Caco-2 (cell line): ENCODE measurements at regions of chr1 and their contacts with region 1.

Region 1: DNA sequence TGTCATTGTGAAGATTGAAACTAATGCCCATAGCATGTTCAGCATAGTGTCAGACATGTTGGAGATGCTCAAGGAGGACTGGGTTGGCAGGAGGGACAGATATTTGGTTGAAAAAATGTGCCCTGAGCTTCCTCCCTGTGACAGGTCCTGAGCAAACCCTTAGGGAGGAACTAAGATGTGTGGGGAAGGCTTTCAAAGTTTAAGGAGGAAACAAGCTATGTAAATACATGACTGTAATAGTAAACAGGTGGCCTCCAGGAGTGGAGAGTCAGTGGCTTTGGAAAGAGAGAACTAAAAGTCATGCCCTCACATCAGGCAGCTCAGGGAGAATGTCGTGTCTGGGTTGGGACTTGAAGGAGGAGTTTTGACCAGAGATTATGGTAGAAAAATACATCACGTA is 9.7 kb upstream of the KIRREL1 start:
- DNase-seq: no peak
- H3K4me3 ChIP-seq: no peak overlapping the region
- H3K4me3 Mint-ChIP-seq: no peak overlapping the region
- H3K27ac Mint-ChIP-seq: no peak overlapping the region
- H3K4me1 ChIP-seq: no peaks in the 10 kb centered on the region
- H3K4me1 Mint-ChIP-seq: no peaks in the 10 kb centered on the region
- H3K27me3 ChIP-seq: no peaks in the 10 kb centered on the region; the same call in 1 of the 2 replicates
- H3K27me3 Mint-ChIP-seq: peaks cover 6% of the 10 kb centered on the region
- CTCF ChIP-seq: no peak

Region 2: GRCh38 chr1:157758018-157758417 is 225.8 kb before region 1 on chr1:
- CTCF ChIA-PET with region 1: no interaction called
- POLR2A ChIA-PET with region 1: no interaction called
- intact Hi-C with region 1: no loop called
- DNase-seq: no peak
- H3K4me3 ChIP-seq: no peak overlapping the region
- H3K4me3 Mint-ChIP-seq: no peak overlapping the region
- H3K27ac Mint-ChIP-seq: no peak overlapping the region
- H3K4me1 ChIP-seq: no peaks in the 10 kb centered on the region
- H3K4me1 Mint-ChIP-seq: no peaks in the 10 kb centered on the region
- H3K27me3 ChIP-seq: no peaks in the 10 kb centered on the region
- H3K27me3 Mint-ChIP-seq: no peaks in the 10 kb centered on the region
- CTCF ChIP-seq: no peak

Region 3: GRCh38 chr1:157963713-157964112 is 20.1 kb before region 1 on chr1:
- CTCF ChIA-PET with region 1: interaction called, 3 read pairs
- POLR2A ChIA-PET with region 1: no interaction called
- intact Hi-C with region 1: loop called (anchors 2 kb)
- DNase-seq: peak; percentile 79 to 82
- H3K4me3 ChIP-seq: no peak overlapping the region
- H3K4me3 Mint-ChIP-seq: no peak overlapping the region
- H3K27ac Mint-ChIP-seq: no peak overlapping the region
- H3K4me1 ChIP-seq: peaks cover 32% of the 10 kb centered on the region
- H3K4me1 Mint-ChIP-seq: peaks cover 38% of the 10 kb centered on the region
- H3K27me3 ChIP-seq: no peaks in the 10 kb centered on the region
- H3K27me3 Mint-ChIP-seq: peaks cover 3% of the 10 kb centered on the region
- CTCF ChIP-seq: peak; percentile 86 to 94